PC-9 (cell line): ENCODE measurements at regions of chr5 and their contacts with region 1.

Region 1: DNA sequence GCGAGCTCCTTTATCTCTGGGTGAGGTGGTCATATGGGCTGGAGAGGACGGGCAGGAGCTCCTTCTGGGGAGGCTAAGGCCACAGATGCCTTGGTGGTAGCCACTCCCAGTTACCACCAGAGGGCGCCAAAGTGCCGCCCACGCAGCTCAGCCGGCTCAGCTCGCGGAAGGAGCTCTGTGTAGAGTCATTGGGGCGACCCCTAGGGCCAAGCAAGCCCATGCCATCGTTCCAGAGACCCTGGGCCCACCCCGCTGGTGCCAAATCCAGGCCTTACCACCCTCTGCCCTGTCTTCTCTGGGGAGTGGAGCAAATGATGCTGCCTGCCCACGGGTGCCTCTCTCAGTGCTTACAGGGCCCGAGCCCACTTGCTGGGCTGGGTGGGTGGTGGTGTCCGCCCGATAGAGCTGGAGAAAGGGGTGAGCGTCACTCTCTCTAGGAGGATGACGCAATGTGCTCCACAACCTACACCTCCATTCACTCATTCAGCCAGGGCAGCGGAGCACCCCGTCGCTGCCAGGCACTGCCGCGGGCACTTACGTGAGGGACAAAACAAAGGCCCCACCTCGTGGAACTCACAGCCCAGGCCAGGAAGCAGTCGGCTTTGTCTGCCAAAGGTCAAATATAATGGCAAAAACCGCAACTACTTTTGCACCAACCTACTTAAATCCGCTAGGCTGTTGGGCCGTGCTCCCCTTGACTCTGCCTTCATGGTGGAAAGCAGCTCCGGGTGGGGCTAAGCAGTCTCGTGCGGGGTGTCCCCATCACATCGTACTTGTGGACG is 13.8 kb downstream of the TSPAN17 start:
- DNase-seq: peak; percentile 50 to 73
- H3K4me3 ChIP-seq: no peak overlapping the region
- H3K27ac ChIP-seq: no peak overlapping the region
- H3K4me1 ChIP-seq: no peaks in the 10 kb centered on the region
- H3K27me3 ChIP-seq: no peaks in the 10 kb centered on the region
- CTCF ChIP-seq: peak; percentile 95

Region 2: DNA sequence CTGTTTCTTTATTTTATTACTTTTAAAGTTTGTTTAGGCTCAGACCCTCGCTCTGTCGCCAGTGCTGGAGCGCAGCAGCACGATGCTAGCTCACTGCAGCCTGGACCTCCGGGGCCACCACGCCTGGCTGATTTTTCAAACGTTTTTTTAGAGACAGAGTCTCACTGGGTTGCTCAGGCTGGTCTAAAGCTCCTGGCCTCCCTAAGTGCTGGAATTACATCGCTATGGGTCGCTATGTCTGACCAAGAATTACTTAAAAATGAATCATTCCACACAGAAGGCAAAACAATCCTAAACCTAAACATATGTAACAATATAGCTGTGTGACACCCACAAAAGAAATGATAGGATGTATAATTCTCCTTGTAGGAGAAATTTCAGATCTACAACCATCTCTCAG is 509.8 kb before region 1 on chr5:
- CTCF ChIA-PET with region 1: no interaction called
- POLR2A ChIA-PET with region 1: no interaction called
- intact Hi-C with region 1: no loop called
- DNase-seq: no peak
- H3K4me3 ChIP-seq: no peak overlapping the region
- H3K27ac ChIP-seq: no peak overlapping the region
- H3K4me1 ChIP-seq: no peaks in the 10 kb centered on the region
- H3K27me3 ChIP-seq: peaks cover 93% of the 10 kb centered on the region
- CTCF ChIP-seq: no peak

Region 3: GRCh38 chr5:176519810-176520720 is 141.0 kb before region 1 on chr5:
- CTCF ChIA-PET with region 1: no interaction called
- POLR2A ChIA-PET with region 1: no interaction called
- intact Hi-C with region 1: no loop called
- DNase-seq: no peak
- H3K4me3 ChIP-seq: no peak overlapping the region
- H3K27ac ChIP-seq: no peak overlapping the region
- H3K4me1 ChIP-seq: peaks cover 8% of the 10 kb centered on the region
- H3K27me3 ChIP-seq: no peaks in the 10 kb centered on the region
- CTCF ChIP-seq: no peak

Region 4: GRCh38 chr5:176744584-176744965 is 83.5 kb after region 1 on chr5:
- CTCF ChIA-PET with region 1: interaction called, 5 read pairs
- POLR2A ChIA-PET with region 1: no interaction called
- intact Hi-C with region 1: loop called (anchors 2 kb)
- DNase-seq: no peak
- H3K4me3 ChIP-seq: no peak overlapping the region
- H3K27ac ChIP-seq: no peak overlapping the region
- H3K4me1 ChIP-seq: no peaks in the 10 kb centered on the region
- H3K27me3 ChIP-seq: peaks cover 18% of the 10 kb centered on the region
- CTCF ChIP-seq: peak; percentile 61

Region 5: DNA sequence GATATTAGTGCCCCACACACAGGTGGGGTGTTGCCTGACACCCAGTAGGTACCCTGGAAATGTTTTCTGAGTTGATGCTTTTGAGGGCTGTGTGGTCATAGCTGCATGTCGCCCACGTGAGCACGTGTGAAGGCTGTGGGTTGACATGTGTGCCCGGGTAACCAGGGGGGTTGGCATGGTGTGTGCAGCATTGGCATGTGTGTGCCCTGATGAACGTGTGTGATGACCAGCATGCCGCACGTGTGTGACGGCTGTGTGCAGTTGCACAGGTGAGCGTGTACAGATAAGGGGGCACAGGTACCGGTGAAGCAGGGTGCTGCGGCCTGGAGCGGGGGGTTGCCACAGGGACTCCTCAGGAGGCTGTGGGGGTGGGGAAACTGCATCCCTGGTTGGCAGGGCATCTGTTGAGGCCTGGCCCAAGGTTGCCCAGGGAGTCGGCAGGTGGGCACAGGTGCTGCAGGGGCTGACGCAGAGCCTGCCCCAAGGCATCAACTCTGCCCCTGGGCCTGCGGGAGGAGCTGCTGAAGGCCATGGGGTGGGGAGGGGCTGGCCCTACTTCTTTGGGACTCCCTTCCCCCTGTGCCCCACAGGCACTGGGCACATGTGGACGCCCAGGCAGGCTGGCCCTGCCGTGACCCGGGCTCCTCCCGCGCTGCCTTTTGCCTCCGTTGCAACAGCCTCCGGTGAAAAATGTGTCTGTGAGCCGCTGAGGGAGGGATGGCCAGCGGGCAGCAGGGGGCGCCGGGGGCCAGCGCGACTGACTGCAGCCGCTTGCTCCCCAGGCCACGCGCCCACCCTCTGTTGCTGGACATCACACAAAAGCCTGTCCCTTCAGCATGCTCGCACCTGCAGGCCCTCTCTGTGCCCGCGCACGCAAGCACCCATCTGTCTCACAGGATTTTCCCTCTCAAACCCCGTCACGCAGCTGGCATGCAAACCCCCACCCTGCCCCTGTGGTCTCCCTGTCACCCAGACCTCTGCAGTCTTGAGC is 151.5 kb after region 1 on chr5:
- CTCF ChIA-PET with region 1: interaction called, 5 read pairs
- POLR2A ChIA-PET with region 1: no interaction called
- intact Hi-C with region 1: loop called (anchors 2 kb)
- DNase-seq: peak in 1 of 2 experiments; percentile 75
- H3K4me3 ChIP-seq: no peak overlapping the region
- H3K27ac ChIP-seq: no peak overlapping the region
- H3K4me1 ChIP-seq: peaks cover 13% of the 10 kb centered on the region
- H3K27me3 ChIP-seq: peaks cover 4% of the 10 kb centered on the region
- CTCF ChIP-seq: peak; percentile 76

Region 6: DNA sequence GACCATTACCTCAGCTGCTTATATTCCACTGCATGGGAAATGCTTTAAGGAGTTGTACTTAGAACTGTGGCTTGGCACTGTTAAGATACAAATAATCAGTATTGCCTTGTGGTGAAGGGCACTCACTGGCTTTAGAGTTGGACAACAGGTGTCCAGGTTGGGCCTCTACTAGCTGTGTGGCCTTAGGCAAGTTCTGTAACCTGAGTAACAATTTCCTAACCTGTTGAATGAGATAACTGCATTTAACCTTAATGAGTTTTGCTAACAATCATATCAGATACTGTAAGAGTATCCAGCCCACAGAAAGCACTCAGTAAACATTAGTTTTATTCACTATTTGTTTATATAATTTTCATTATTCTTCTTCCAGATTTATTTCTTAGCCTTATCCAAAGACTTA is 255.3 kb after region 1 on chr5:
- CTCF ChIA-PET with region 1: interaction called, 19 read pairs
- POLR2A ChIA-PET with region 1: no interaction called
- intact Hi-C with region 1: no loop called
- DNase-seq: peak; percentile 18 to 37
- H3K4me3 ChIP-seq: no peak overlapping the region
- H3K27ac ChIP-seq: 0 out of 2 replicates have a peak overlapping the region, but pooled peaks have one; percentile 30
- H3K4me1 ChIP-seq: peaks cover 13% of the 10 kb centered on the region
- H3K27me3 ChIP-seq: no peaks in the 10 kb centered on the region
- CTCF ChIP-seq: no peak

Region 7: GRCh38 chr5:176959051-176959450 is 298.0 kb after region 1 on chr5:
- CTCF ChIA-PET with region 1: interaction called, 5 read pairs
- POLR2A ChIA-PET with region 1: no interaction called
- intact Hi-C with region 1: loop called (anchors 2 kb)
- DNase-seq: peak in 1 of 2 experiments; percentile 54
- H3K4me3 ChIP-seq: no peak overlapping the region
- H3K27ac ChIP-seq: no peak overlapping the region
- H3K4me1 ChIP-seq: no peaks in the 10 kb centered on the region
- H3K27me3 ChIP-seq: no peaks in the 10 kb centered on the region
- CTCF ChIP-seq: peak; percentile 74

Region 8: GRCh38 chr5:177290816-177291596 is 630.0 kb after region 1 on chr5:
- CTCF ChIA-PET with region 1: no interaction called
- POLR2A ChIA-PET with region 1: no interaction called
- intact Hi-C with region 1: no loop called
- DNase-seq: no peak
- H3K4me3 ChIP-seq: no peak overlapping the region
- H3K27ac ChIP-seq: no peak overlapping the region
- H3K4me1 ChIP-seq: no peaks in the 10 kb centered on the region
- H3K27me3 ChIP-seq: no peaks in the 10 kb centered on the region
- CTCF ChIP-seq: no peak